ENCODE measurements at regions of chr2 and their contacts with region 1.

Region 1: GRCh38 chr2:98736464-98736889 is 5.5 kb upstream of the MGAT4A start:
- DNase-seq: peak; percentile 46
- H3K4me3 Mint-ChIP-seq: peak overlapping the region; percentile 20
- H3K27ac Mint-ChIP-seq: peak overlapping the region; percentile 62
- H3K4me1 Mint-ChIP-seq: peaks cover 60% of the 10 kb centered on the region
- H3K27me3 Mint-ChIP-seq: no peaks in the 10 kb centered on the region

Region 2: DNA sequence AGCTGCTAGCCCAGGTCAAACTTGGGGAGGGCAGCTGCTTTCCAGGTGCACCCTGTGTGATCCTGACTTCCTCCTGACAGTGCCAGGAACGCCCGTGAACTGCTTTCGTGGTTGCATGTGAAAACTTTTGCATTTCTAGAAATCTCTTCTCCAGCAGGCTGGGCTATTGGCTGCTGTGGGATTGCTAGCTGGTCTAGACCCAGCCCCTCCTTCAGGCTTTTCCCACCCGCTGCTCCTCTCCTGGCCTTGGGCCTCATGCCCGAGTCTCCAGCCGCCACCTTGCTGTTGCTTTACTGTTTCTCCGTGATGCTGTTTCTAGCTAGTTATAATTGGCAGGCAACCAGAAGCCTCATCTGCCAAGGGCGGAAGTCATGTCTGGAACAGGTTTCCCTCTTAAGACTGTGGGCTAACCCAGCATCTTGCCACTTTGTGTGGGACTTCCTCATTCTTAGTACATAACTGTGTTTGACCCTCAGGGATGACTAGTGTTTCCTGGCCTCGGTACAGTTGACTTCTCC is 21.5 kb after region 1 on chr2:
- intact Hi-C with region 1: loop called (anchors 1 kb)
- DNase-seq: peak; percentile 41
- H3K4me3 Mint-ChIP-seq: peak overlapping the region; percentile 50
- H3K27ac Mint-ChIP-seq: peak overlapping the region; percentile 83
- H3K4me1 Mint-ChIP-seq: peaks cover 44% of the 10 kb centered on the region
- H3K27me3 Mint-ChIP-seq: peaks cover 3% of the 10 kb centered on the region

Region 3: DNA sequence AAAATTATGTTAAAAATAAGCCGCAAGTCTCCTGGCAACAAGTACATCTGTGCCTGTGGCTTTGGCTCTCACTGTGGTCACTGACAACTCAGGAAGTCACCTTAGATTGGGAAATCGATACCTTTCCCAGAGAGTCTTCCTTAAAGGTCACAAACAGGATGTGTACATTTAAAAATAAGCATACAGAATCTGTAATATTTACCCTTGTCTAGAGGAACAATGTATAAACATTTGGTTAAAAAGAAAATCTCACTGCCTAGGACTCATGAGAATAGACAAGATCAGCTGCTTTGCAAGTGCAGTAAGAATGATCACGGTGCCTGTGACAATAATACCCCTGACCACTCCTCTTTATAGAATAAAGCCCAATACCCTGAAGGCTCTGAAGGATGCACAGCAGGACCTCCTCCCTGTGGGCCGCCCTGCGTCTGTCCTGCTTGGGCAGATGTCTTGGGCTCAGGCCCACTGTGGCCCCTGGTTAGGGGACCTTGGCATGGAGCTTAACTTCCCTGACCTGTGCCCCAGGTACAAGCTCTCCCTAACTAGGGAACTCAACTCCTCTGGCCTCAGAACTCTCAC is 92.4 kb after region 1 on chr2:
- intact Hi-C with region 1: loop called (anchors 2 kb)
- DNase-seq: peak; percentile 11
- H3K4me3 Mint-ChIP-seq: peak overlapping the region; percentile 13
- H3K27ac Mint-ChIP-seq: peak overlapping the region; percentile 17
- H3K4me1 Mint-ChIP-seq: peaks cover 54% of the 10 kb centered on the region
- H3K27me3 Mint-ChIP-seq: peaks cover 9% of the 10 kb centered on the region

Measured in activated T-helper 2 cell treated with anti-CD3 and anti-CD28 coated beads, Interferon-gamma antibody, Interleukin-2, Interleukin-4, amounts not matched to agents 10 μg/mL and 5 μg/mL and 100 μg/mL, durations not matched to agents 14 hours and 24 hours and 36 hours (primary cell).